CD8-positive, alpha-beta T cell (primary cell): ENCODE measurements at regions of chr16 and their contacts with region 1.

Region 1: GRCh38 chr16:85735225-85735635 is 15.7 kb downstream of the C16orf74 start:
- DNase-seq: peak; percentile 12 to 84 (median 68)
- ATAC-seq: peak; percentile 90
- H3K4me3 ChIP-seq: peak overlapping the region; percentile 34 to 42
- H3K4me3 Mint-ChIP-seq: peak overlapping the region; percentile 77
- H3K27ac ChIP-seq: peak overlapping the region; percentile 43 to 49
- H3K27ac Mint-ChIP-seq: peak overlapping the region; percentile 74
- H3K4me1 ChIP-seq: peaks cover 30% of the 10 kb centered on the region
- H3K4me1 Mint-ChIP-seq: peaks cover 42% of the 10 kb centered on the region
- H3K27me3 ChIP-seq: no peaks in the 10 kb centered on the region
- H3K27me3 Mint-ChIP-seq: no peaks in the 10 kb centered on the region
- CTCF ChIP-seq: no peak

Region 2: GRCh38 chr16:84138824-84139627 is 1596.2 kb before region 1 on chr16:
- CTCF ChIA-PET with region 1: no interaction called
- POLR2A ChIA-PET with region 1: no interaction called
- intact Hi-C with region 1: no loop called
- DNase-seq: peak in 1 of 9 experiments; percentile 47
- ATAC-seq: peak; percentile 41
- H3K4me3 ChIP-seq: no peak overlapping the region
- H3K4me3 Mint-ChIP-seq: no peak overlapping the region
- H3K27ac ChIP-seq: peak overlapping the region in 1 of 2 experiments; percentile 33
- H3K27ac Mint-ChIP-seq: no peak overlapping the region
- H3K4me1 ChIP-seq: peaks cover 15% of the 10 kb centered on the region
- H3K4me1 Mint-ChIP-seq: peaks cover 41% of the 10 kb centered on the region
- H3K27me3 ChIP-seq: no peaks in the 10 kb centered on the region
- H3K27me3 Mint-ChIP-seq: no peaks in the 10 kb centered on the region
- CTCF ChIP-seq: no peak

Region 3: GRCh38 chr16:85688586-85689284 is 46.5 kb before region 1 on chr16 and contains the start of gene GINS2:
- CTCF ChIA-PET with region 1: no interaction called
- POLR2A ChIA-PET with region 1: interaction called, 3 read pairs
- intact Hi-C with region 1: loop called in 1 of 2 experiments (anchors 2 kb)
- DNase-seq: peak; percentile 84 to 95 (median 89)
- ATAC-seq: peak; percentile 100
- H3K4me3 ChIP-seq: peak within 1 kb of the TSS; percentile 51 to 88
- H3K4me3 Mint-ChIP-seq: peak within 1 kb of the TSS; percentile 75
- H3K27ac ChIP-seq: no peak within 1 kb of the TSS
- H3K27ac Mint-ChIP-seq: no peak within 1 kb of the TSS
- H3K4me1 ChIP-seq: peaks cover 7% of the 10 kb centered on the region
- H3K4me1 Mint-ChIP-seq: peaks cover 2% of the 10 kb centered on the region
- H3K27me3 ChIP-seq: no peaks in the 10 kb centered on the region
- H3K27me3 Mint-ChIP-seq: peaks cover 5% of the 10 kb centered on the region
- CTCF ChIP-seq: no peak
- total RNA-seq, gene GINS2: 0.58 to 1.0 TPM

Region 4: GRCh38 chr16:85750827-85751697 is 15.8 kb after region 1 on chr16 and contains the start of gene C16orf74:
- CTCF ChIA-PET with region 1: interaction called, 3 read pairs
- POLR2A ChIA-PET with region 1: interaction called, 3 read pairs
- intact Hi-C with region 1: loop called in 1 of 2 experiments (anchors 2 kb)
- DNase-seq: peak in 3 of 9 experiments; percentile 37 to 57 (median 46)
- ATAC-seq: peak; percentile 71
- H3K4me3 ChIP-seq: peak within 1 kb of the TSS; percentile 48 to 54
- H3K4me3 Mint-ChIP-seq: peak within 1 kb of the TSS; percentile 85
- H3K27ac ChIP-seq: no peak within 1 kb of the TSS
- H3K27ac Mint-ChIP-seq: no peak within 1 kb of the TSS
- H3K4me1 ChIP-seq: peaks cover 14% of the 10 kb centered on the region
- H3K4me1 Mint-ChIP-seq: peaks cover 9% of the 10 kb centered on the region
- H3K27me3 ChIP-seq: peaks cover 4 to 25% of the 10 kb centered on the region in 2 experiments
- H3K27me3 Mint-ChIP-seq: peaks cover 9% of the 10 kb centered on the region
- CTCF ChIP-seq: no peak
- total RNA-seq, gene C16orf74: 2.3 to 3.5 TPM

Region 5: GRCh38 chr16:85799497-85800337 is 64.5 kb after region 1 on chr16 and contains the starts of genes COX4I1 and EMC8:
- CTCF ChIA-PET with region 1: no interaction called
- POLR2A ChIA-PET with region 1: no interaction called
- intact Hi-C with region 1: loop called in 1 of 2 experiments (anchors 2 kb)
- DNase-seq: peak; percentile 84 to 96 (median 93)
- ATAC-seq: peak; percentile 76
- H3K4me3 ChIP-seq: peak within 1 kb of the TSS; percentile 83 to 87
- H3K4me3 Mint-ChIP-seq: peak within 1 kb of the TSS; percentile 89
- H3K27ac ChIP-seq: peak within 1 kb of the TSS; percentile 77 to 92
- H3K27ac Mint-ChIP-seq: peak within 1 kb of the TSS; percentile 97
- H3K4me1 ChIP-seq: peaks cover 33% of the 10 kb centered on the region
- H3K4me1 Mint-ChIP-seq: peaks cover 69% of the 10 kb centered on the region
- H3K27me3 ChIP-seq: no peaks in the 10 kb centered on the region
- H3K27me3 Mint-ChIP-seq: no peaks in the 10 kb centered on the region
- CTCF ChIP-seq: no peak
- total RNA-seq, gene COX4I1: 876 to 878 TPM
- total RNA-seq, gene EMC8: 56.0 to 56.2 TPM

Region 6: DNA sequence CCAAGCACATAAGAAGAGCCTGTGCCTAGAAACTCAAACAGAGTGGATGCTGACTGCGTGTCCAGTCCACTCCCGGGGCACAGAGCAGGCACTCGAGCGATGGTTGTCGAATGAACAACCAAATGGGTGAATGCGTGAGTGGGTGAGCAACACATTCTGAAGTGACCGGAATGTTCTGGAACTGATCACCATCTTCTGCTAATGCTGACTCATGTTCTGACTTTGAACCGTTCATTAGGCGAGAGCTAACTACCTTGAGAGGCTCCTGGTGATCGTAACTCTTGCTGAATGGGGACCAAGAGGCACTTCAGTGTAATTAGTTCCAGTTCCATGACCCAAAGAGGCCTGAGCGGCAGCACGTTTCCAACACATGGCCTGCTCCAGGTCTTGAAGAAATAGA is 201.6 kb after region 1 on chr16:
- CTCF ChIA-PET with region 1: no interaction called
- POLR2A ChIA-PET with region 1: no interaction called
- intact Hi-C with region 1: no loop called
- DNase-seq: peak in 2 of 9 experiments; percentile 16 to 54
- ATAC-seq: no peak
- H3K4me3 ChIP-seq: peak overlapping the region in 1 of 2 experiments; percentile 43
- H3K4me3 Mint-ChIP-seq: peak overlapping the region; percentile 70
- H3K27ac ChIP-seq: peak overlapping the region; percentile 64 to 74
- H3K27ac Mint-ChIP-seq: peak overlapping the region; percentile 92
- H3K4me1 ChIP-seq: peaks cover 34% of the 10 kb centered on the region
- H3K4me1 Mint-ChIP-seq: peaks cover 39% of the 10 kb centered on the region
- H3K27me3 ChIP-seq: no peaks in the 10 kb centered on the region
- H3K27me3 Mint-ChIP-seq: no peaks in the 10 kb centered on the region
- CTCF ChIP-seq: no peak